H1 (cell line): ENCODE measurements at regions of chr1 and their contacts with region 1.

Region 1: GRCh38 chr1:201361652-201362504 is 15.6 kb downstream of the TNNT2 start:
- DNase-seq: peak; percentile 56 to 88
- H3K4me3 ChIP-seq: no peak overlapping the region
- H3K27ac ChIP-seq: no peak overlapping the region
- H3K4me1 ChIP-seq: peaks cover 0 to 5% (median under 1%) of the 10 kb centered on the region in 4 experiments; a peak in 5 of 7 replicates
- H3K27me3 ChIP-seq: no peaks in the 10 kb centered on the region
- CTCF ChIP-seq: peak; percentile 94 to 96 (median 95)
- EP300 ChIP-seq: no peak
- POLR2A ChIP-seq: no peak
- RAD21 ChIP-seq: peak; percentile 98

Region 2: DNA sequence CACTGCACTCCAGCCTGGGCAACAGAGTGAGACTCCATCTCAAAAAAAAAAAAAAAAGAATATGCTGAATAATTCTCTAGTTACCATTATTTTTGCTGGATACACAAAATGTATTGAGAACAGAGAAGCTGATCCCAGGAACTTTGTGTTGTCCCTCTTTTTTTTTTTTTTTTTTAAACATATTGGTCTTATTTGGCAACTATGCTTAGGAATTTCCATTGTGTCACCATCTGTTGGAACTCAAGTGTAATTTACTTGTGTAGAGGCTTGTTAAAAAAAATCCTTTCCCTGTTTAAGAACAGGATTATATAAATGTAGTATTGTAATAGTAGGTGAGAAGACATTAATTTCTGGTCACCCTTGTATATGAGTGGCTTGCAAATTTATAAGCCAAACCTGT is 594.6 kb before region 1 on chr1:
- CTCF ChIA-PET with region 1: no interaction called
- POLR2A ChIA-PET with region 1: no interaction called
- DNase-seq: no peak
- H3K4me3 ChIP-seq: no peak overlapping the region
- H3K27ac ChIP-seq: no peak overlapping the region
- H3K4me1 ChIP-seq: no peaks in the 10 kb centered on the region
- H3K27me3 ChIP-seq: no peaks in the 10 kb centered on the region
- CTCF ChIP-seq: no peak
- EP300 ChIP-seq: no peak
- POLR2A ChIP-seq: no peak
- RAD21 ChIP-seq: no peak

Region 3: DNA sequence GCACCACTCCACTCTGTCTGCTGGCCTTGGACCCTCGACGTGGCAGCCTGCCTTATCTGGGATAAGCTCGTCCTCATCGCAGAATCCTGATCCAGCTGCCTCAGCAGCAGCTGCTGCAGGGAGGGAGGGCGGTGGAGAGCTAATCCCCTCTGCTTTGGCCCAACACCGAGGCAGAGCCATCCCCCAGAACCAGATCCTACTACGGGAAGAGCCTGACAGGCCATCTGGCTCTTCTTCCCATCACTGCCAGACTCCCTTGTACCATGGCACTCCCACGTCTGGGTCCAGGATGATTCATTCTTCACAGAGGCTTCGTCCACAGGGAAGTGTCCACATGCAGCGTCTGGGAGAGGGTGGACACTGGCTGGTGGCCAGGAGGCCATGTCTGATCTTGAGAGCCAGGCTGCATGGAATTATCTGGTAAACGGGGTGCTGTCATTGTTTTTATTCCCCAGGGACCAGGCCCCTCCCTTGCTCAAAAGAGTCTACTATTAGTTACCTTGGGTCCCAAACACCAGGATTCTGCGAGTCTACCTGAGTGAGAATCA is 93.2 kb before region 1 on chr1:
- CTCF ChIA-PET with region 1: interaction called, 154 read pairs
- POLR2A ChIA-PET with region 1: no interaction called
- DNase-seq: no peak
- H3K4me3 ChIP-seq: no peak overlapping the region
- H3K27ac ChIP-seq: no peak overlapping the region
- H3K4me1 ChIP-seq: peaks cover 0 to 4% (median 0%) of the 10 kb centered on the region in 4 experiments; a peak in 2 of 7 replicates
- H3K27me3 ChIP-seq: no peaks in the 10 kb centered on the region; a peak in 1 of 7 replicates
- CTCF ChIP-seq: no peak
- EP300 ChIP-seq: no peak
- POLR2A ChIP-seq: no peak
- RAD21 ChIP-seq: no peak

Region 4: GRCh38 chr1:201288766-201289165 is 73.1 kb before region 1 on chr1:
- CTCF ChIA-PET with region 1: interaction called, 45 read pairs
- POLR2A ChIA-PET with region 1: no interaction called
- DNase-seq: no peak
- H3K4me3 ChIP-seq: no peak overlapping the region
- H3K27ac ChIP-seq: no peak overlapping the region
- H3K4me1 ChIP-seq: peaks cover 0 to 6% (median 0%) of the 10 kb centered on the region in 4 experiments; a peak in 4 of 7 replicates
- H3K27me3 ChIP-seq: peaks cover 4 to 11% (median 10%) of the 10 kb centered on the region in 4 experiments
- CTCF ChIP-seq: peak in 1 of 3 experiments; percentile 23; a peak in 1 of 4 replicates
- EP300 ChIP-seq: no peak
- POLR2A ChIP-seq: no peak
- RAD21 ChIP-seq: no peak; a peak in 1 of 4 replicates

Region 5: GRCh38 chr1:201309426-201309825 is 52.5 kb before region 1 on chr1:
- CTCF ChIA-PET with region 1: interaction called, 151 read pairs
- POLR2A ChIA-PET with region 1: no interaction called
- DNase-seq: peak; percentile 34 to 69
- H3K4me3 ChIP-seq: no peak overlapping the region
- H3K27ac ChIP-seq: no peak overlapping the region
- H3K4me1 ChIP-seq: peaks cover 0 to 3% (median 0%) of the 10 kb centered on the region in 4 experiments; a peak in 1 of 7 replicates
- H3K27me3 ChIP-seq: peaks cover 0 to 10% (median 6%) of the 10 kb centered on the region in 4 experiments; a peak in 4 of 7 replicates
- CTCF ChIP-seq: peak; percentile 57 to 70 (median 68)
- EP300 ChIP-seq: no peak
- POLR2A ChIP-seq: no peak
- RAD21 ChIP-seq: peak; percentile 75 to 77

Region 6: DNA sequence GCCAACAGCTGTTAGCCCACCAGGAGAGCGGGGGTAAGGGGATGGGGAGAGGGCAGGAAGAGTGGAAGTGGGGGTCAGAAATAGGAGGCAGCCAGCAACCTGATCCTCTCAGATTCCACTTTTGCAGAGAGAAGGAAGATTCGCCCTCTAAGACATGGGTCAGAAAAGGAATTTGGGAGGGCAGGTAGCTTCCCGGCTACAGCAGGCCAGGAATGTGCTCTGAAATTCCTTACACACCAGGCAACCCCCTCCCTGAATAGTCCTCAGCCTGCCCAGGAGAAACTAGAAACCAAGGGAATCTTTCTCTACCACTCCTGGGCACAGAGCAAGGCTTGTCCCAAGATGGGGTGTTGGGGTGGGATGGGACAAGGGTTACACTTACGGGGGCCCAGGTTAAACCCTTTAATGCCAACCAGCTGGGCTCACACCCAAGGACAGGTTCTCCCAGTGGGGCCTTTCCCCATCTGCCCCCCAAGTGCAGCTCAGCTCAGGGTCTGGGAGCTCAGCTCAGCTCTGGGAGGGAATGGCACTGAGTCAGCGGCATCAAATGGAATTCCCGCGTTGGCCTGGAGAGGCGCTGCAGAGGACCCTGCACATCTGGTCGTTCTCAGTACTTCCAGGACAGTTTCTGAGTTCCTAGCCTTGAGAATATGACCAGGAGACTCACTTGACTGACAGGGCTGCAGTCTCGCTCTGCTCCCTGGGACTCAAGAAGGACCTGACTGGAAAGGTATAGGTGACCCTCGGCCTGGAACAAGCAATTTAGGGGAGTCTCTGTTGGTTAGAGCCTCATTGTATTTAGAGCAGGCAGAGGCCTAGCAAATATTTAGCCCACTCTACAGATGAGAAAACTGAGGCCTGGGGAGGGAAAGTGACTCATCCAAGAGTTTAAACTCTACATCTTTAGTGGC is 14.8 kb after region 1 on chr1:
- CTCF ChIA-PET with region 1: interaction called, 165 read pairs
- POLR2A ChIA-PET with region 1: interaction called, 49 read pairs
- DNase-seq: peak; percentile 86 to 93
- H3K4me3 ChIP-seq: peak overlapping the region in 3 of 4 experiments; percentile 30 to 51 (median 46); a peak in 5 of 8 replicates
- H3K27ac ChIP-seq: peak overlapping the region; percentile 95
- H3K4me1 ChIP-seq: peaks cover 9 to 40% (median 29%) of the 10 kb centered on the region in 4 experiments
- H3K27me3 ChIP-seq: no peaks in the 10 kb centered on the region
- CTCF ChIP-seq: peak; percentile 67 to 96 (median 94)
- EP300 ChIP-seq: peak in 1 of 2 experiments; percentile 76; a peak in 1 of 3 replicates
- POLR2A ChIP-seq: peak; percentile 76 to 77
- RAD21 ChIP-seq: peak; percentile 37 to 55; a peak in 3 of 4 replicates

Region 7: DNA sequence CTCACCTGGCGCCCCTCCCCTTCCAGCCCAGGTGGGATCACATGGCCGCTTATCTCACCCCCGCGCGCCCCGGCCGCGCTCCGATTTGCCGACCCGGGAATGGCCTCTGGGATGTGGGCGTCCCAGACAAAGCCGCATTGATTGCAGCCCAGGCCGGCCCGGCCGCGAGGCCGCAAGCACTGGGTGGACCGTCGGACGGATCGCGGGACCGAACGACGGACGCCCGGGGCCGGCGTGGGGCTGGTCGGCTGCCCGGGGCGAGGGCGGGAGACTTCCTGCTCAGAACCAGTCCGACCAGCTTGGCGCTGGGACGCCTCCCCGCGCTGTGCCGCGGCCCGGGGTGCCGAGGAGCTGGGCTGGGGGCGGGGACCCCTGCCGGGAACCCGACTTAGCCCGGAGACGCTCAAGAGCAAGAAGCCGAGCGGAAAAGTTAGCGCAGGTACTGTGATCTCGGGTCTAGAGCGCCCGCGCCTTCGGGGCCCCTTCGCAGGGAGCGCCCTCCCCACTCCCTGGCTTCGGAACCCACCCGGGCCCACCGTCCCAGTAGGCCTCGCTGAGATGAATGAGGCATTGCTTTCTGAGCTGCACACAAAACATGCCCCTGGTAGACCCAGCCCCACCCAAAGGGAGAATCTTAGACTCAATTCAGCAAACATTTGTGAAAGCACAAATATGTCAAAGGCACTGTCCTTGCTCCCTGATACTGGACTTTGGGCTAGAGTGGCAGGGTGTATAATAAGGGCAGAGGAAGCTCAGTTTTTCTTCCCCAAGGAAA is 37.7 kb after region 1 on chr1:
- CTCF ChIA-PET with region 1: interaction called, 15 read pairs
- POLR2A ChIA-PET with region 1: interaction called, 6 read pairs
- DNase-seq: peak; percentile 13 to 85
- H3K4me3 ChIP-seq: peak overlapping the region; percentile 51 to 74 (median 60)
- H3K27ac ChIP-seq: no peak overlapping the region
- H3K4me1 ChIP-seq: peaks cover 3 to 24% (median 16%) of the 10 kb centered on the region in 4 experiments
- H3K27me3 ChIP-seq: peaks cover 0 to 12% (median 2%) of the 10 kb centered on the region in 4 experiments; a peak in 5 of 7 replicates
- CTCF ChIP-seq: no peak
- EP300 ChIP-seq: no peak
- POLR2A ChIP-seq: peak in 1 of 2 experiments; percentile 75; a peak in 2 of 3 replicates
- RAD21 ChIP-seq: no peak